Activated T-helper 1 cell treated with anti-CD3 and anti-CD28 coated beads, Interleukin-12 subunit alpha, Interleukin-12 subunit beta, Interleukin-2, Interleukin-4 antibody, amounts not matched to agents 30 ng/mL and 10 ng/mL and 1 ng/mL, durations not matched to agents 14 hours and 24 hours and 36 hours (primary cell): ENCODE measurements at regions of chr6 and their contacts with region 1.

Region 1: GRCh38 chr6:188821-189655 is 103.2 kb upstream of the DUSP22 start:
- DNase-seq: peak; percentile 77
- H3K4me3 Mint-ChIP-seq: peak overlapping the region; percentile 48
- H3K27ac Mint-ChIP-seq: peak overlapping the region; percentile 76
- H3K4me1 Mint-ChIP-seq: peaks cover 52% of the 10 kb centered on the region
- H3K27me3 Mint-ChIP-seq: peaks cover 3% of the 10 kb centered on the region

Region 2: GRCh38 chr6:209432-210103 is 20.5 kb after region 1 on chr6:
- intact Hi-C with region 1: loop called (anchors 1 kb)
- DNase-seq: peak; percentile 37
- H3K4me3 Mint-ChIP-seq: peak overlapping the region; percentile 68
- H3K27ac Mint-ChIP-seq: peak overlapping the region; percentile 53
- H3K4me1 Mint-ChIP-seq: peaks cover 42% of the 10 kb centered on the region
- H3K27me3 Mint-ChIP-seq: peaks cover 17% of the 10 kb centered on the region

Region 3: GRCh38 chr6:251920-252319 is 62.9 kb after region 1 on chr6:
- intact Hi-C with region 1: loop called (anchors 1 kb)
- DNase-seq: no peak
- H3K4me3 Mint-ChIP-seq: peak overlapping the region; percentile 48
- H3K27ac Mint-ChIP-seq: peak overlapping the region; percentile 90
- H3K4me1 Mint-ChIP-seq: peaks cover 38% of the 10 kb centered on the region
- H3K27me3 Mint-ChIP-seq: peaks cover 3% of the 10 kb centered on the region

Region 4: DNA sequence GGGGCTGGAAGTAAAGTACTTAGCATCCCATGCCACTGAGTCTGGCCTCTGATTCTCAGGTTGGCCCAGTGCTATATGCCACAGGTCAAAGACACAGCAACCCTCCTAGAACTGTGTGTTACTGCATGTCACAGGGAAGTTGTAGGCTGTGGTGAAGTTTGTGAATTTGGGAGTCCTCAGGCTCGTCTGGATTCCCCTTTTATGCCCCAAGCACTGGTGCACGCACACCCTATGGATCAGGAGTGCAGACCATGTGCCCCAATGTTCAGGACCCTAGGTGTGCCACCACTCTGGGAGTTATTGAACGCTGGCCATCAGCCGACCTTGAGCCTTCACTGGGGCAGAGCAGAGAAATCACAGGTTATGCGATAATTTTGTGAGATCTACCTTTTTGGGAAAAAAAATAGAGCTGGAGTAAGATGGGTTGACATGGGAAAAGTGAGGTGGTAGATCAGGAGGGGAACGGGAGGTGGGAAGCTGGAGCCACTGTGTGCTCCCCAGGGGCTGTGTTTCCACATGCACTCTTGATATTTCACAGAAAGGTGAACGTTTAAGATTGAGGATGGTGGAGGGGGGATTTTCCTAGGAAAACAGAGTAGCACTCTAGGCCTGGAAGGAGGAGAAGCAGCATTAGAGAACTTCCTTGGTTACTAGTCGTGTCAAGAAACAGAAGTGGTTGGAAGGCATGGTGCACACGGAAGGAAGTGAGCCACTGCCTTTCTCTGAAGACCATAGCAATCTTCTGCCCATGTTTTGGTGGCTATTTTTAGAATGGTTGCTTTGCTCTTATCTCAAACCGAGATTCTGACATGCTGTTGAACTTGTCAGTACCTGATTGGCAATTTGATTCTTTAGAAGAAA is 147.4 kb after region 1 on chr6:
- intact Hi-C with region 1: loop called (anchors 1 kb)
- DNase-seq: no peak
- H3K4me3 Mint-ChIP-seq: peak overlapping the region; percentile 21
- H3K27ac Mint-ChIP-seq: peak overlapping the region; percentile 57
- H3K4me1 Mint-ChIP-seq: peaks cover 54% of the 10 kb centered on the region
- H3K27me3 Mint-ChIP-seq: no peaks in the 10 kb centered on the region

Region 5: DNA sequence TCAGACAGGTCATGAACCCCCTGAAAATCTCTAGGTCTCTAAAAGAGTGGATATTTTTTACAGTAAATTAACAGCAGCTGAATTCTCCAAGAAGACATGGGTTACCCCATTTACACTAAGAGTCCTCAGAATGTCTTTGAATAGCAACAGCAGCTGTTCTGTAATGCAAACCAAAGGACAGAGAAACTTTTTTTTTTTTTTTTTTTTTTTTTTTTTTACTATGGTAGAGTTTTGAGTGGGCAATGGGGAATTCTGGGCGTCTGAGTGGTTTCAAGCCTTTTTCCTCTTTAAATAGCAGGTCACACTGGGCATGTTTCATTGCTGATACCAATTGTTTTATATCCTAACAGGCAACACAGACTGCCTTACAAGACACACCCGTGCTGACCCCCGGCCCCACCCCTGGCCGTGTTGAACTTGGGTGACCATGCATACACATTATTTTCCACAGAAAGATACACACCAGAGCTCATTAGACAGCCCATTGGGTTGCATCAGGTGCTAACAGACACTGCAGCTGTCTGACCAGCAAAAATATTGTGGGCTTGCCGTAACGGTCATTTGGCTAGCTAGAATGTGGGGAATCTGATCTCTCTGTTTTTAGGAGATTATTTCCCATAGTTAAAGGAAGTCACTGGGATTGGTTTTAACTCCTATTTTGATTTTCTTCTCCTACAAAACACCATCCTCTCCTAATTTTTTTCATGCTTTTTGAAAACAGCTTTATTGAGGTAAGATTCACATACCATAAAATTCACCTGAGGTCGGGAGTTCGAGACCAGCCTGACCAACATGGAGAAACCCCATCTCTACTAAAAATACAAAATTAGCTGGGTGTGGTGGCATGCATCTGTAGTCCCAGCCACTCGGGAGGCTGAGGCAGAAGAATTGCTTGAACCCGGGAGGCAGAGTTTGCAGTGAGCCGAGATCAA is 175.8 kb after region 1 on chr6:
- intact Hi-C with region 1: no loop called
- DNase-seq: no peak
- H3K4me3 Mint-ChIP-seq: no peak overlapping the region
- H3K27ac Mint-ChIP-seq: no peak overlapping the region
- H3K4me1 Mint-ChIP-seq: no peaks in the 10 kb centered on the region
- H3K27me3 Mint-ChIP-seq: peaks cover 11% of the 10 kb centered on the region

Region 6: GRCh38 chr6:431986-432385 is 242.9 kb after region 1 on chr6:
- intact Hi-C with region 1: loop called (anchors 1 kb)
- DNase-seq: peak; percentile 70
- H3K4me3 Mint-ChIP-seq: peak overlapping the region; percentile 61
- H3K27ac Mint-ChIP-seq: peak overlapping the region; percentile 60
- H3K4me1 Mint-ChIP-seq: peaks cover 85% of the 10 kb centered on the region
- H3K27me3 Mint-ChIP-seq: no peaks in the 10 kb centered on the region

Region 7: DNA sequence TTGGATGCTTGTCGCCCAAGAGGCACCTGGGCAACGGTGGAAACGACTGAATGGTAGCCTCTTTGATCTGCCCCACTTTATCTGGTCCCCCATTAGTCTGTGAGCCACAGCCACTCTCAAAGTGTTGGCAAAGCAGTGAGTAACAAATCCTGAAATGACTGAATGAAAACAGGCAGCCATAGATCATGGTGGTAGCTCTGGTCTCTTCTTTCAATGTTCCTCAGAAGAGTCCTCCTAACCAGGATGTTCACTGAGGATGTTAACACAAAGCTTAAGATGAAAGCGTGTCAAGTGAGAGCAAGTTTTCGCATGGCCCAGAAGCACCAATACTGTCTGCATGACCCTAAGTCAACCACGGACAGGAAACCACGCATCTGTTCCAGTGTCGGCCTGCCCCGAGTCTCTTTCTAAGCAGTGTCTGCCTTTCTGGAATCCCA is 309.8 kb after region 1 on chr6:
- intact Hi-C with region 1: loop called (anchors 1 kb)
- DNase-seq: peak; percentile 56
- H3K4me3 Mint-ChIP-seq: peak overlapping the region; percentile 80
- H3K27ac Mint-ChIP-seq: peak overlapping the region; percentile 94
- H3K4me1 Mint-ChIP-seq: peaks cover 87% of the 10 kb centered on the region
- H3K27me3 Mint-ChIP-seq: no peaks in the 10 kb centered on the region

Region 8: DNA sequence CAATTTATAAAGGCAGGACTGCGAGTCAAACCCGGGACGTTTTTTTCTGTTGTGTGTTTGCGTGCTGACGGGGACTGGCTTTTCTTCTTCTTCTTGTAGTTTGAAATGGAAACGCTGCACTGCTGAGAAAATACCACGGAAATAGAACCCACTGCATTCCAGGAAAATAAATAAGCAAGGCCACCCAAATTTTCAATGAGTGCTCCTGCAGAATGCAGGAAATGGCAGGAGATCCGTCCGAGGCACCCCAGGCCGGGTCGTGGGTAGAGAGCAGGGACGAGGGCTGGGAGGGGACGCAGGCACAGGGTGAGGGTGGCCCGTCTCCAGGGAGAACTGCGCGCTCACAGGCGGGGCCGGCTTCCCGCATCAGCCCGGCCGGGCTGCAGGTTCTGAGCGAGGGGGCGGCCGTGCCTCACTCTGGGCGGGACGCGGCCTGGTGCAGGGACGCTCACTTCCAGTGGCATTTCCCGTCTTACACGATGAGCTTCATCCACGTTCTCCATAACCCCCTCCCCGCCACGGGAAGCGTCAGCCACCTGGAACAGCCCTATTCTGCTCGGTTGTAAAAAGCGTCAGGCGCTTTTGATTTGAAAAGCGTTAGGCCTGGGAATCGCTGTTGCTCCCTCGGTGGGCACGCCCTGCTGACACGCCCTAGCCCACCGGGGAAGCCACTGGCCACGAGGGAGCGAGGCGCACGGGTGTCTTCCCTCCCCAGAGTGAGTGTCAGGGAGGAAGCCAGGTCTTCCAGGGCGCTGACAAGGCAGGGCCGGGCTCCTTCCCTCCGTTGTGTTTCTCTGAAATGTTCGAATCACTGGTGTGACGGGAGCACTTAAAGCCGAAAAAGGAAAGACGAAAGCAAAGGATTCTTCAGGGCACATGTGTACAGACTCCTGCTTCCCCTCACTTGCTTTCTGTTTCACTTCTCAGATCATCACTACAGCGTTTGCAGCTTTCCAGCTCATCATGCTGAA is 521.8 kb after region 1 on chr6:
- intact Hi-C with region 1: loop called (anchors 1 kb)
- DNase-seq: peak; percentile 64
- H3K4me3 Mint-ChIP-seq: peak overlapping the region; percentile 95
- H3K27ac Mint-ChIP-seq: peak overlapping the region; percentile 99
- H3K4me1 Mint-ChIP-seq: peaks cover 44% of the 10 kb centered on the region
- H3K27me3 Mint-ChIP-seq: no peaks in the 10 kb centered on the region